Activated CD4-positive, alpha-beta T cell treated with anti-CD3 and anti-CD28 coated beads, Interleukin-2, amount 10 ng/mL, durations not matched to agents 24 days and 14 days (primary cell): ENCODE measurements at regions of chrX and their contacts with region 1.

Region 1: GRCh38 chrX:150365051-150365989 is 2.2 kb downstream of the MAMLD1 start:
- DNase-seq: peak; percentile 93
- H3K4me3 Mint-ChIP-seq: peak overlapping the region; percentile 83
- H3K27ac Mint-ChIP-seq: peak overlapping the region; percentile 86
- H3K4me1 Mint-ChIP-seq: peaks cover 22% of the 10 kb centered on the region
- H3K27me3 Mint-ChIP-seq: peaks cover 6% of the 10 kb centered on the region

Region 2: DNA sequence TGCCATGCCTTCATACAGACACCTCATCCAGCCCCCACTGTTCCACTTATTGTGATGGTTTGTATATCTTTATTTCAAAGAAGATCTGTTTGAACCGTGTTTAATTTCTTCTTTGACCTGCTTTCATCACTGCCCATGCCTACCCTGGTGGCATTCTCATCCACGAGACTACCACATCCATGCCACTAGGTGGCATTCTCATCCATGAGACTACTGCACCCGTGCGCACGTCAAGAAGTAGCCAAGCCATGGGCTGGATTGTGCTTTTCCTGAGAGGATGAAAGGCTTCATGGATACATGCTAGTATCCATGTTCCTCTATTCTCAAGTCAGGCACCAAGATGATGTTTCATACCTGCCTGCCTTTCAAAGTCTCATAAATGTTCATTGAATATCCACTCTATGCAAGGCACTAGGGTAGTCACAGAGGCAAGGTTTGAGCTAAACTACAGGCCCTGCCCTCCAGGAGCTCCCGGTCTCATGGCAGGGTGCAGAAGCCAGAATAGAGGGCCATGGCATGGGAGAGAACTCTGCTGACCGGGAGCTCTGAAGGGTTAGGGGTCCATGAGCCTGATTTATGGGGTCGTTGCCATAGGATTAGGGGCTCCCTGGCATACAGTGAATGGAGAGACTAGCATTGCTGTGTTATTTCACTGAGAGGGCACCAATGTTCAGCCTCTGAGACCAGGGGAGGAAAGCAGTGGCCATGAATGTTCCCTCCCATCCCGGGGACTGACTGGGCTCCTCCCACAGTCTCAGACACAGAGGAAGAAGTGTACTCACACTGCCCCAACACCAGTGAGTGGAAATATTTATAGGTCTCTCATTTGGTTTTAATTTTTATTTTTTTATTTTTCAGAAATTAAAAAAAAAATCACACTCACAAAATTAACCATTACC is 402.2 kb before region 1 on chrX:
- intact Hi-C with region 1: loop called (anchors 5 kb)
- DNase-seq: peak; percentile 74
- H3K4me3 Mint-ChIP-seq: no peak overlapping the region
- H3K27ac Mint-ChIP-seq: no peak overlapping the region
- H3K4me1 Mint-ChIP-seq: no peaks in the 10 kb centered on the region
- H3K27me3 Mint-ChIP-seq: no peaks in the 10 kb centered on the region

Region 3: DNA sequence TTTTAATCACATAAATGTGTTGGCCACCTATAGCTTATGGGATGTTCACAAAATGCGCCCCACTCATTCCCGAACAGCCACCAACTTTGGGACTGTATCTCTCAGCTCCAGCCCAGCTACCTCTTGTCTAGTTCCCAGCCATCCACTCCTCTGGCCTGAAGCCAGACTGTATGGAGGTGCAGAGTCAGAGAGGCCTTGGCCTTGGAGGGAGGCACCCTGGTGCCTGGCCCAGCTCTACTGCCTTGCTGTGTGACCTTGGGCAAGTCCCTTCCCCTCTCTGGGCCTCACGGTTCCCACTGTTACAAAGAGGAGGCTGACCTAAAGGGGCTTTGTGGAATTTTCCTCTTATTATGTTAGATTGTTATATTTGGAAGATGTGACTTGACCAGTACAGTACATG is 11.7 kb after region 1 on chrX:
- intact Hi-C with region 1: no loop called
- DNase-seq: no peak
- H3K4me3 Mint-ChIP-seq: no peak overlapping the region
- H3K27ac Mint-ChIP-seq: no peak overlapping the region
- H3K4me1 Mint-ChIP-seq: peaks cover 7% of the 10 kb centered on the region
- H3K27me3 Mint-ChIP-seq: peaks cover 4% of the 10 kb centered on the region

Region 4: DNA sequence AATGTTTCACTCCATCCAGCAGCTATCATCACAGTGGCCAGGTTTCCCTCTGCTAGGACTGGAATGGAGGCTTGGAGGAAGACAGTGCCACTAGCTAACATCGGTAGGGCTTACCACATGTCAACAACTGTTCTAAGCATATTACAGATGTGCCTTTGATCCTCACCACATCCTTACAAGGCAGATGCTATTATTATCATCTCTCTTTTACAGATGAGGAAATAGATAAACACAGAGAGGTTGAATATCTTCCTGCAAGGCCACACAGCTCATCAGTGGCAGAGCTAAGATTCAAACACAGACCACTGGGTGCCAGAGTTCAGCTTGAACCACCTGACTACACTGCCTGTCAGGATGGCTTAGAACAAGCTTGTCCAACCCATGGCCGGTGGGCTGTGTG is 45.2 kb after region 1 on chrX:
- intact Hi-C with region 1: loop called (anchors 5 kb)
- DNase-seq: peak; percentile 76
- H3K4me3 Mint-ChIP-seq: peak overlapping the region; percentile 43
- H3K27ac Mint-ChIP-seq: peak overlapping the region; percentile 32
- H3K4me1 Mint-ChIP-seq: peaks cover 32% of the 10 kb centered on the region
- H3K27me3 Mint-ChIP-seq: no peaks in the 10 kb centered on the region

Region 5: GRCh38 chrX:150568320-150569154 is 203.2 kb after region 1 on chrX and contains the start of gene MTM1:
- intact Hi-C with region 1: loop called (anchors 2 kb)
- DNase-seq: peak; percentile 97
- H3K4me3 Mint-ChIP-seq: peak within 1 kb of the TSS; percentile 86
- H3K27ac Mint-ChIP-seq: peak within 1 kb of the TSS; percentile 81
- H3K4me1 Mint-ChIP-seq: peaks cover 33% of the 10 kb centered on the region
- H3K27me3 Mint-ChIP-seq: no peaks in the 10 kb centered on the region
- total RNA-seq, gene MTM1: 18.2 and 23.7 TPM in 2 replicates

Region 6: GRCh38 chrX:150693775-150694574 is 328.7 kb after region 1 on chrX:
- intact Hi-C with region 1: loop called (anchors 2 kb)
- DNase-seq: peak; percentile 91
- H3K4me3 Mint-ChIP-seq: peak overlapping the region; percentile 89
- H3K27ac Mint-ChIP-seq: peak overlapping the region; percentile 97
- H3K4me1 Mint-ChIP-seq: peaks cover 58% of the 10 kb centered on the region
- H3K27me3 Mint-ChIP-seq: no peaks in the 10 kb centered on the region